ENCODE measurements at regions of chr6 and their contacts with region 1.

Region 1: DNA sequence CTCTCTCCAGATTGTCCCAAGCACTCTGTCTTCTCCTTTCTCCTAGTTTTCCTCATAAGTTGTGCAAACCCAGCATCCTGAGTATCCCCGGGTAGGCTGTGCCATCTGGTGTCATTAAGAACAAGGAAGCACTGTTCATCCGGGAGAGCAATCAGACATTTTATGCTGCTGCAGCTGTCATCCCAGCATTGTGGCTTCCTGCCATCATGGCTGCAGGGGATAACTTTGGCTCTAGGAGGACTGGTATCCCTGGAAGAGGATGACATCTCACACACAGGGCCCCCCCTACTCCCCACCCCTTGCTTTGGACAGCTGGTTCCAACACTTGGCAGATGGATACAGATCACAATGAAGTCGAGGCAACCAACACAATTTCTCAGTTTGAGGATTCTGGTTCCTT is 1195.1 kb upstream of the MAP3K7 start:
- DNase-seq: no peak
- H3K4me3 ChIP-seq: no peak overlapping the region
- H3K27ac ChIP-seq: no peak overlapping the region
- H3K4me1 ChIP-seq: no peaks in the 10 kb centered on the region
- H3K27me3 ChIP-seq: no peaks in the 10 kb centered on the region
- CTCF ChIP-seq: peak in 1 of 2 donors; percentile 15

Region 2: GRCh38 chr6:91337967-91338366 is 444.0 kb before region 1 on chr6:
- CTCF ChIA-PET with region 1: no interaction called
- dilution Hi-C with region 1: no loop called
- in situ Hi-C with region 1: no loop called
- intact Hi-C with region 1: loop called (anchors 10 kb)
- DNase-seq: no peak
- H3K4me3 ChIP-seq: no peak overlapping the region
- H3K27ac ChIP-seq: no peak overlapping the region
- H3K4me1 ChIP-seq: no peaks in the 10 kb centered on the region
- H3K27me3 ChIP-seq: no peaks in the 10 kb centered on the region
- CTCF ChIP-seq: peak in 1 of 2 donors; percentile 23